Adrenal gland (tissue), 19 donors: ENCODE measurements at regions of chr4 and their contacts with region 1.

Region 1: GRCh38 chr4:163554870-163555465 is 60.5 kb downstream of the TMA16 start:
- DNase-seq: no peak
- H3K4me3 ChIP-seq: no peak overlapping the region
- H3K27ac ChIP-seq: no peak overlapping the region
- H3K4me1 ChIP-seq: peaks cover 4 to 7% of the 10 kb centered on the region in 2 donors
- H3K27me3 ChIP-seq: no peaks in the 10 kb centered on the region
- CTCF ChIP-seq: peak; percentile 43 to 81 (median 61)
- POLR2A ChIP-seq: no peak

Region 2: GRCh38 chr4:163679189-163679588 is 124.2 kb after region 1 on chr4:
- intact Hi-C with region 1: loop called in 1 of 2 experiments (anchors 10 kb)
- DNase-seq: peak in 2 of 7 donors; percentile 7 to 20
- H3K4me3 ChIP-seq: no peak overlapping the region
- H3K27ac ChIP-seq: no peak overlapping the region
- H3K4me1 ChIP-seq: no peaks in the 10 kb centered on the region
- H3K27me3 ChIP-seq: no peaks in the 10 kb centered on the region
- CTCF ChIP-seq: no peak
- POLR2A ChIP-seq: no peak

Region 3: DNA sequence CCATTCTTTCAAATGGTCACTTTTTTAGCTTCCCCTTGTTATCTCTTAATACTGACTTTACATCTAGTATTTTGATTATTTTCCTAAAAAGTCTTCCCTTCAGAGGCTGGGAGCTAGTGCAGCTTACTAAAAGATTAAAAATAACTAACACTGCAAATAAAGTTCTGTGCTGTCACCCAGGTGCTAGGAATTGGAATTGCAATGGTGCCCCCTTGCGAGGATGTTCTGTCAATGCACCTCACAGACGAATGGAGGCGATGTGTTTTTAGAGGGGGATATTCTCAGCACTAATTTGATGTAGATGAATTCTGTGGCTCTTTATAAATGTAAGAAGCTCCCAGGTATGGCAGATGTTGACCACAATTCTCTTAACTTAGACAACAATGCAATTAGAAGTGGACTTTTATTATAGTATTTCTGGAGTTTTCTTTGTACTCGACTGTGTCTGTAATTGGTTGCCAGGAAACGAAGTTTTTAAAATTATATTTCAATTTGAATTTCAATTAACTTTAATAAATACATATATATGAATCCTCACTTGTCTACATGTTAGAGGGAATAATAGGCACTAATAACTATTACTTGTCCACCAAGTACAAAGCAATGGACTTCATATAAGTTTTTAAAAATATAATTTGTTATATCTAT is 1177.0 kb after region 1 on chr4:
- intact Hi-C with region 1: loop called in 1 of 2 experiments (anchors 10 kb)
- DNase-seq: peak; percentile 19 to 64 (median 38)
- H3K4me3 ChIP-seq: no peak overlapping the region
- H3K27ac ChIP-seq: no peak overlapping the region
- H3K4me1 ChIP-seq: no peaks in the 10 kb centered on the region
- H3K27me3 ChIP-seq: no peaks in the 10 kb centered on the region
- CTCF ChIP-seq: peak; percentile 62 to 84 (median 67)
- POLR2A ChIP-seq: no peak